Lower lobe of right lung (tissue), 2 donors: ENCODE measurements at regions of chr3 and their contacts with region 1.

Region 1: GRCh38 chr3:98022978-98023820 is 11.9 kb downstream of the GABRR3 start:
- DNase-seq: peak; percentile 90
- ATAC-seq: peak; percentile 82 to 92
- H3K4me3 ChIP-seq: no peak overlapping the region
- H3K27ac ChIP-seq: no peak overlapping the region
- H3K4me1 ChIP-seq: peaks cover 4% of the 10 kb centered on the region
- H3K27me3 ChIP-seq: no peaks in the 10 kb centered on the region
- CTCF ChIP-seq: peak; percentile 98

Region 2: DNA sequence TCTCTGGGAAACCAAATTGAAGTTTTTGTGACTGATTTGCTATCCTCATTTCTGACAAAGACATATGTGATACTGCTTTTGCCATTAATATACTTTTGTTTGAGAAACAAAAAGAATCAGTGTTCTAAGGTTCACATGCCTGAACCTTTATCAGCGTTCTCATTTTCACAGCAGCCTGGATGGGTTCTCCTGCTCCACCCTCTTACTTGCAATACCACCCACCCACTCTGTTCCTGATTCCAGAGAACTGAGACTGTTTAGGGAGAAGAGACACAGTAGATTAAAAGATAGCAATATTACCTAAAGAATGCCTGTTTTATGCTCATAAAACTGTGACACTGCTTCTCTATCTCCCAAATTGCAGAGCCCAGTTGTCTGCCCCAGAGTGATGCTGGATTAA is 284.4 kb before region 1 on chr3:
- intact Hi-C with region 1: no loop called
- DNase-seq: no peak
- ATAC-seq: no peak
- H3K4me3 ChIP-seq: no peak overlapping the region
- H3K27ac ChIP-seq: no peak overlapping the region
- H3K4me1 ChIP-seq: no peaks in the 10 kb centered on the region
- H3K27me3 ChIP-seq: no peaks in the 10 kb centered on the region
- CTCF ChIP-seq: no peak

Region 3: DNA sequence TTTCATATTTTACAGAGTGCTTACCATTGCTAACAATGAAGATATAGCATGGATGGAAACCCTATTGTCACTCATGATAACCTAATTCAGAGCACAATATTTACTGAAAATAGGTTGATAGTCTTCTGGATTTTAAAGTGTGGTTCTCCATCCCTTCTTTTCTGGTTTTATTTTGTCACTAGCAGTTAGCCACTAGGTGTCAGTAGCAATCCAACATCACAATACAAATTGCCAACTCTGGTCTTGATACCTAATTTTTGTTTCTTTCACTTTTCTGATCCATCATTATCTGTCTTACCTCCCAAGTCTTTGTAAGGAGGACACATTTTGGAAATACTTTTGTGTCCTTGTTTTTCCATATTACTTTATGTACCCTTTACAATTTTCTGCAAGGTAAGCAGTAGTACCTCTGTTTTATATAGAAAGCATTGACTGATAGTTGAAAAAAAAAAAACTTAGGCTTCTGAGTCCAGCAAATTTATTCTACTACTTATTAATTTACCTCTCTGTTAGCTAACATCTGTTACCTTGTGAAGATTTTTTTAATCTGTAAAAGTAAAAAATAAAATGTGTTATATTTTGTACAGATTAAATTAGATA is 229.7 kb before region 1 on chr3:
- intact Hi-C with region 1: loop called (anchors 5 kb)
- DNase-seq: no peak
- ATAC-seq: peak in 1 of 2 donors; percentile 53
- H3K4me3 ChIP-seq: no peak overlapping the region
- H3K27ac ChIP-seq: no peak overlapping the region
- H3K4me1 ChIP-seq: no peaks in the 10 kb centered on the region
- H3K27me3 ChIP-seq: no peaks in the 10 kb centered on the region
- CTCF ChIP-seq: peak; percentile 82

Region 4: GRCh38 chr3:97901313-97902248 is 121.6 kb before region 1 on chr3:
- intact Hi-C with region 1: no loop called
- DNase-seq: no peak
- ATAC-seq: peak in 1 of 2 donors; percentile 14
- H3K4me3 ChIP-seq: no peak overlapping the region
- H3K27ac ChIP-seq: peak overlapping the region; percentile 57
- H3K4me1 ChIP-seq: peaks cover 15% of the 10 kb centered on the region
- H3K27me3 ChIP-seq: no peaks in the 10 kb centered on the region
- CTCF ChIP-seq: no peak